ENCODE measurements at regions of chr17 and their contacts with region 1.

Region 1: DNA sequence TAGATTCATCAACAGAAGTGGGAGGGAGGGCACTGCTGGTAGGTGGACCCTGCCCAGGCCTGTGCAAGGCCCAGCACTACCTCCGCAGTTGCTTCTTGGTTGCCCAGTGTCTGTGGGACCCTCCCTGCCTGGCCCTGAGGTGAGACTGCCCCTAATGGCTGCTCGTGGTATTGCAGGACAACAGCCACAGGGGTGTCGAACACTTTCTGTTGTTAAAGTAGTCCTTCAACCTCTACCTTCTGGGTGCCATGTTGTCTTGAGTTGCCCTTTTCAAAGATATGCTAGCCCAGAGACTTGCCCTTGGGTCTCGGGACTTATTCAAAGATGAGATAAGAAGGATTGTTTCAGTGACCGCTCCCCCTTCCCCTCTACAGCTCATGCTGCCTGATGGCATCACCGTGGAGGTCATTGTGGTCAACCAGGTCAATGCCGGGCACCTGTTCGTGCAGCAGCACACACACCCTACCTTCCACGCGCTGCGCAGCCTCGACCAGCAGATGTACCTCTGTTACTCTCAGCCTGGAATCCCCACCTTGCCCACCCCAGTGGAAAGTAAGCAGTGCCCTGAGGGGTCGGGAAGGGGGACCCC is 29.1 kb downstream of the AKAP1 start:
- DNase-seq: no peak
- H3K4me3 ChIP-seq: no peak overlapping the region
- H3K27ac ChIP-seq: peak overlapping the region in 1 of 2 donors; percentile 28
- H3K4me1 ChIP-seq: peaks cover 17 to 34% of the 10 kb centered on the region in 2 donors
- H3K27me3 ChIP-seq: no peaks in the 10 kb centered on the region
- CTCF ChIP-seq: peak; percentile 60 to 91 (median 84)

Region 2: GRCh38 chr17:56880133-56880532 is 234.0 kb before region 1 on chr17:
- intact Hi-C with region 1: no loop called
- DNase-seq: no peak
- H3K4me3 ChIP-seq: no peak overlapping the region
- H3K27ac ChIP-seq: no peak overlapping the region
- H3K4me1 ChIP-seq: no peaks in the 10 kb centered on the region
- H3K27me3 ChIP-seq: no peaks in the 10 kb centered on the region
- CTCF ChIP-seq: no peak

Region 3: DNA sequence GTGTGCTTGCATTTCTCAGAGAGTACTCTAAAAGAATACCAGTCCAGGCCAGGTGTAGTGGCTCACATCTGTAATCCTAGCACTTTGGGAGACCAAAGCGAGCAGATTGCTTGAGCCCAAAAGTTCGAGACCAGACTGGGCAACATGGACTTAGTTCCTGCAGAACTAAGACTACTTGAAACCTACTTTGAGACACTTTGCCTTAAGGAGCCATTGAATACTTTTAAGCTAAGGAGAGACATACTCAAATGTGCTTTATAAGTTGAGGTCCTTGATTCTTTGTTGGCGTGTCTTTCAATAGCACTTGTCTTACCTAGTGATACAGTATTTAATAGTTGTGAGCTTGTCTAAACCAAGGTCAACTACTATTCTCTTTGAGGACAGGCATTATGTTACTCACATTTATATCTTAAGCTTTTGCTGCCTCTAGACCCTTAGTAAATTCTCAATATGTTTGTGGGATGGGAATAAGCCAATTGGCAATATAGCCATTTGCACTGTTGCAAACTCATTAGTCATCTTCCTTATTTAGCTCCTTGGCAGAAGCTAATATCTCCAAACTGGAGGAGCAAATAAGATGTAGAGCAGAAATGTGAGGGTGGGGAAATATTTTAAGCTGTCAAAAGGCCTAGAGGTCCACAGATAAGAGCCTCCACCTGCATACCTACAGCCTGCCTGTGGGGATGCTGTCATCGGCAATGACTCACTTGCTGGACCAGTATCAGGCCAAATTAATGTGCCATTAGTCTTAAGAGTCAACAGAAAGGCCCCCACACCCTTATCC is 120.0 kb before region 1 on chr17:
- intact Hi-C with region 1: no loop called
- DNase-seq: no peak
- H3K4me3 ChIP-seq: no peak overlapping the region
- H3K27ac ChIP-seq: no peak overlapping the region
- H3K4me1 ChIP-seq: no peaks in the 10 kb centered on the region
- H3K27me3 ChIP-seq: no peaks in the 10 kb centered on the region
- CTCF ChIP-seq: no peak

Region 4: GRCh38 chr17:57033295-57033694 is 80.9 kb before region 1 on chr17:
- intact Hi-C with region 1: loop called (anchors 5 kb)
- DNase-seq: peak in 1 of 2 donors; percentile 86
- H3K4me3 ChIP-seq: no peak overlapping the region
- H3K27ac ChIP-seq: peak overlapping the region; percentile 85 to 92
- H3K4me1 ChIP-seq: peaks cover 8 to 43% of the 10 kb centered on the region in 2 donors
- H3K27me3 ChIP-seq: no peaks in the 10 kb centered on the region
- CTCF ChIP-seq: no peak